ENCODE measurements at regions of chr2 and their contacts with region 1.

Region 1: GRCh38 chr2:238267330-238267710 is 21.1 kb downstream of the PER2 start:
- DNase-seq: no peak
- ATAC-seq: no peak
- H3K4me3 ChIP-seq: no peak overlapping the region
- H3K27ac ChIP-seq: no peak overlapping the region
- H3K4me1 ChIP-seq: peaks cover 17% of the 10 kb centered on the region
- H3K27me3 ChIP-seq: no peaks in the 10 kb centered on the region
- CTCF ChIP-seq: no peak

Region 2: DNA sequence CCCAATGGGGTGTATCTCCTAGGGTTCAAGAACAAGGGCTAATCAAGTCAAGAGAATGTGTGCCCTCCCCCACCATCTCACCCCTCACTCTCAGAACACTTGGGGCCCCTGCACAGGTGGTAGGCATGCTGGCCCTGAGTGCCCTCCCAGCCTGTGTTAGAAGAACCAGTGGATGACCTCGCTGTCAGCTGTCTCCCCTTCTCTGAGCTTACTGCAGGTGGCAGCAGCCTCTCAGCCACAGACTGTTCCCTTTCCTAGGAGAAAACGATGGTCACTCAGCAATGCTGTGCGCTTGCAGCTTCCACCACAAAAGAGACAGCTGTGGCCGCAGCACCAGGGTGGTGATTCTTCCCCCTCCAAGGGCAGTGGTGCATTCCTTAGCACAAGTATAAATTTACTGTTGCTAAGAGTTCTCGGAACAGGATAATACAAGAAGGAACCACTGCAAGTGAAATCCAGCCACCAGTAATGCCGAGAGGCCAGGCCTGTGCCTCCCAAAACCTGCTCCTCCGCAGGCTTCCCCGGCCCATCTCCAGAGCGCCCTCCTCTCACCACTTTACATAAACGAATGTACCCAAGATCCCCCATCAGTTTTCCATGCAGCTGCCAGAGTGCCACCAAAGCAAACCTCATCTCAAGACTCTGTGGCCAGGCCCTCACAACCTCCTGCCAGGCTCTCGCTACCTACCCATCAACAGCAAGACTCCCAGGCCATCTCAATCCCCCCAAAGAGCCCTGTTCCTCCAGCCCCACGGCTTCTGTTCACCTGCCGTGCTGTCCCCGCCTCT is 408.8 kb before region 1 on chr2:
- intact Hi-C with region 1: loop called (anchors 5 kb)
- DNase-seq: peak; percentile 72
- ATAC-seq: peak; percentile 85
- H3K4me3 ChIP-seq: no peak overlapping the region
- H3K27ac ChIP-seq: no peak overlapping the region
- H3K4me1 ChIP-seq: peaks cover 8% of the 10 kb centered on the region
- H3K27me3 ChIP-seq: peaks cover 31% of the 10 kb centered on the region
- CTCF ChIP-seq: peak; percentile 69

Region 3: DNA sequence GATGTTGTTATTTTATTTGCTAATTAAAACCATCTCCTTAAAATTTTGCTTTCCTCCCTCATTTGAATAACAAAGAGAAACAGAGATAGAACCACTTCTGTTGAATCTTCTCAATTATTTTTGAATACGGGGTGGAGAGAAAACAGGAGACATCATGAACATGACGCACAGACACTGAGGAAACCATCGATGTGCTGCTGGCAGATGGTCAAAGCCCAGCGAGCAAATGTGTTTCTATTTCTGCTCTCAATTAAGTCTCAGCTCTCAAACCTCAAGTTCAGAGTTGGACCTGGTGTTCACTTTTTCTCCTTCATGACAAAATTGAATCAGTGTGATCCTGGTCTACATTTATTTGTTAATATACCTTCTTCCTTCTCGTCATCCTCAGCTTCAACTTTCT is 544.4 kb after region 1 on chr2:
- intact Hi-C with region 1: no loop called
- DNase-seq: no peak
- ATAC-seq: no peak
- H3K4me3 ChIP-seq: no peak overlapping the region
- H3K27ac ChIP-seq: no peak overlapping the region
- H3K4me1 ChIP-seq: no peaks in the 10 kb centered on the region
- H3K27me3 ChIP-seq: peaks cover 2% of the 10 kb centered on the region
- CTCF ChIP-seq: no peak